ENCODE measurements at regions of chrX and their contacts with region 1.

Region 1: DNA sequence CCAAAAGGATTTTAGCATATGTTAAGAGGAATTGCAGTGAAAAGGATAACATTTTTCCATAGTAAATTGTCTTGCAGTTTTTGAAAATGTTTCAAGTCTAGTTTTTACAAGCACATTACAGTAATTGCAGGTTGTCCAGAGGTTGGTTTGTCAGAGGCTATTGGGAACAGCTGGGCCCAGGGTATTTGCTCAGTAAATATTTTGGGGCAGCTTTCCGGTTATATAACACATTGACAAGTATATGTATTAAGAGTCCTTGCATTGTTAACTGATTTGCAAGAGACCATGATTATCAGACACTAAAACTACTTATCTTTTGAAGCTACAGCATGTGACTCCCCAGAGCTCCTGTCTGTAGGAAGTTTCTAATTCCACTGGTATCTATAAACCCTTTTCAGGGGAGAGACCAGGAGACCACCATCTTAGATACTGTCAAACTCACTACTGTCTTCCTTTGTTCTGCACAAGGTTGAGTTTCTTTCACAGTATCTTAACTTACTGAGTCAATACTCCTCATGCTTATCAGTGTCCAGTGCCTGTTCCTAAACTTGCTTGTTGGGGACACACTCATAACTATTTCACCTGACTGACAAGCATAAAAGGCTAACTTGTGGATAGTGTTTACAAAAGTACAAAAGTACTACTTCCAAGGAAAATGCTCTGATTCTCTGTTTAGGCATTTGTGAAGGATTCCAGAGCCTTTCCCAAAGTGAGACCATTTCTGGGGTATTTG is 18.9 kb upstream of the RGN start:
- DNase-seq: no peak
- ATAC-seq: no peak
- H3K4me3 ChIP-seq: no peak overlapping the region
- H3K27ac ChIP-seq: no peak overlapping the region
- H3K4me1 ChIP-seq: no peaks in the 10 kb centered on the region
- H3K27me3 ChIP-seq: no peaks in the 10 kb centered on the region
- CTCF ChIP-seq: no peak

Region 2: DNA sequence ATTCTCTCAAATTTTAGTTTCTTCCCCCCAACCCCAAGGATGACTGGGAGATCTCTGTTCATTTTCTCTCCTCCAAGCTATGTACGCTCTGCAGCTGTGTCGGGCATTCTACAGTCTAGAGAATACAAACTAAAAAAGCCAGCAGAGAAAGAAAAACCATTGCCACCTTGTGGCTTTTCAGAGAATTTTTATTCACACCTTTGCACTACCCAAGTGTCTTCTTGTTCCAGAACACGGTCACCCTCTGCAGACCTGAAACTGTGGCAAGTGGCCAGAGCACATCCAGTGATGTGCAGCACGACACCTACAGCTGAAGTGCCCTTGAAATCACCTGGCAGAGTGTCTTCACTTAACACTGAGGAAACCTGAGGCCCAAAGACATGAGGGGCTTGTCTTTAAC is 417.2 kb before region 1 on chrX:
- CTCF ChIA-PET with region 1: no interaction called
- POLR2A ChIA-PET with region 1: interaction called, 13 read pairs
- in situ Hi-C with region 1: no loop called
- intact Hi-C with region 1: no loop called
- DNase-seq: no peak
- ATAC-seq: peak; percentile 77
- H3K4me3 ChIP-seq: no peak overlapping the region
- H3K27ac ChIP-seq: no peak overlapping the region
- H3K4me1 ChIP-seq: no peaks in the 10 kb centered on the region
- H3K27me3 ChIP-seq: no peaks in the 10 kb centered on the region
- CTCF ChIP-seq: peak; percentile 54

Region 3: DNA sequence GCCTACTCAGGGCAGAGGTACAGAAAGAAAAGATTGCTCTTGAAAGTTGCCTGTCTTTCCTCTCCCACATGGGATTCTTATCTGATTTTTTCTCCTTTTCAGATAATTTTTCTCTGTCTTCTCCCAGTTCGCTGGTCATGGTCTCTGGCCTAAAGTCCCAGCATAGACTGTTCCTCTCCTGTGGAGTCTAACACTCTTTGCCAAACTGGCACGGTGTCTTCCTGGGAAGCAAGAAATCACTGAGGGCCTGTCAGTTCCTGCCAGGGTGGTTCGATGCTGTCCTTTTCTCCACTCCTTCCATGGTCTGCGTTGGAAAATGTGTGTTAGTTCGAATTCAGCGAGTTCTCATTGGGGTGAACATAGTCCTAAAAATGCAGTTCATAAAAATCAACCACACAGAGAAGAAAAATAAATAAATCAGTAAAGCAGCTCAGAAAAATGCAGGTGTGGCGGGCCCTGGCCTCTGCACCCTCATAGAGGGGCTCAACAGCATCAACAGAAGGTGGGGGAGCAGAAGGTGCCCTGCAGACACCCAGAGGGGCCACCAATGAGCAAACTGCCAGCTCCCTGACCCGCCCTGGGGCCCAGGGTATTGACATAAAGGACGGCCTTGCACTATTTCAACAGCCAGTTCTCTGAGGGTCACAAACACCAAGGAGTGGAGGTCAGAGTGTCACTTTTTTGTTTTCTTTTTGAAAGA is 21.1 kb after region 1 on chrX:
- CTCF ChIA-PET with region 1: no interaction called
- POLR2A ChIA-PET with region 1: no interaction called
- in situ Hi-C with region 1: no loop called
- intact Hi-C with region 1: no loop called
- DNase-seq: no peak
- ATAC-seq: no peak
- H3K4me3 ChIP-seq: no peak overlapping the region
- H3K27ac ChIP-seq: no peak overlapping the region
- H3K4me1 ChIP-seq: no peaks in the 10 kb centered on the region
- H3K27me3 ChIP-seq: no peaks in the 10 kb centered on the region
- CTCF ChIP-seq: no peak

Region 4: GRCh38 chrX:47158131-47158530 is 98.8 kb after region 1 on chrX:
- CTCF ChIA-PET with region 1: no interaction called
- POLR2A ChIA-PET with region 1: no interaction called
- in situ Hi-C with region 1: no loop called
- intact Hi-C with region 1: no loop called
- DNase-seq: no peak
- ATAC-seq: no peak; the same call in 1 of the 2 replicates
- H3K4me3 ChIP-seq: no peak overlapping the region
- H3K27ac ChIP-seq: no peak overlapping the region
- H3K4me1 ChIP-seq: no peaks in the 10 kb centered on the region
- H3K27me3 ChIP-seq: no peaks in the 10 kb centered on the region
- CTCF ChIP-seq: no peak

Measured in Panc1 (cell line).